Cardiac septum (tissue), 1 donor: ENCODE measurements at regions of chr10 and their contacts with region 1.

Region 1: DNA sequence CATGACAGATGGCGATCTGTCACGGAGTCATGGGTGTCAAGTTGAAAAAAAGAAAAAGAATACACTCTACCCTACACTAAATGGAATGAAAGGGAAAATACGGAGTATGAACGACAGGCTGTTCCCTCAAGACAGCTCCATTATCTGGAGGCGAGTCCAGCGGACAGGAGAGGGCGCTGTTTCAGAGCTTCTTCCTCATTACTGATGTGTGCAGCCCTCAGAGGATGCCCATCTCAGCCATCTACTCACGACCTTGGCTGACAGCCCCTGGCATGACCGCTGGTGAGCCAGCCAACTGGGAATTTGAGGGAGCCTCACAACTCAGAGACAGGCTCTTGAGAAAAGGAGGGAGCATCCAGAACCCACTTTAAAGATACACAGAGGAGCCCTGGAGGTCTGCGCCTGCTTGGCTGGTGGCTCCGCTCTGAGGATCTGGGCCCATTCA is 49.6 kb upstream of the SMNDC1 start:
- DNase-seq: peak; percentile 86

Region 2: GRCh38 chr10:110399163-110400094 is 45.1 kb after region 1 on chr10:
- intact Hi-C with region 1: loop called (anchors 5 kb)
- DNase-seq: no peak

Region 3: DNA sequence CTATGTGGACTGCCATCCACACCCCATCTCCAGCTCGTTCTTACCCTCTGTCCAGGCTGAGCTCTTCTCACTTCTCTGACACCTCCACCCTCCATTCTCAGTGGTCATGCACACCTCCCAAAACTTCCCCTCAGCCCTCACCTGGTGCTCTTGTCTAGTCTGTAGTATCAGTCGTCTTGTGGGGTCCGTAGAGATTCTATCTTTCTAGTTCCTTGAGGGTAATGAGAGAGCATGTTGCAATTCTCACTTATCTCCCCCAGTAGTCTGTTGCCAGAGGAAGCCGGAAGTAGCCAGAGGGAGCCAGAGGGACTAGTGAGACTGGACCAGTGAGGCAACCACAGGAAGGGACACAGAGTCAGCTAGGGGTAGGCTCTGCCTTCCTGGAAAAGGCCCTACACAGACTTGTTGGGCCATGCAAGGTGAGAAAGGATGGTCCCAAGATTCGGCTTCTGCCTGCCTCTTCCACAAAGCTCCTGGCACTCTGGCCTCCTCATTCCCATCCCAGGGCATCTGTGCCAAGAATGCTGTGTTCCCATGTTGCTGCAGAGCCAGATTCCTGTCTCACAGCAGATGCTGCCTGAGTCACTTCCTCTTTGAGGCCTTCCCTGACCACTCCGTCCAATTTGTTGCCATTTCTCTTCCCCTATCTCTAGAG is 92.7 kb after region 1 on chr10:
- intact Hi-C with region 1: loop called (anchors 10 kb)
- DNase-seq: peak; percentile 74

Region 4: DNA sequence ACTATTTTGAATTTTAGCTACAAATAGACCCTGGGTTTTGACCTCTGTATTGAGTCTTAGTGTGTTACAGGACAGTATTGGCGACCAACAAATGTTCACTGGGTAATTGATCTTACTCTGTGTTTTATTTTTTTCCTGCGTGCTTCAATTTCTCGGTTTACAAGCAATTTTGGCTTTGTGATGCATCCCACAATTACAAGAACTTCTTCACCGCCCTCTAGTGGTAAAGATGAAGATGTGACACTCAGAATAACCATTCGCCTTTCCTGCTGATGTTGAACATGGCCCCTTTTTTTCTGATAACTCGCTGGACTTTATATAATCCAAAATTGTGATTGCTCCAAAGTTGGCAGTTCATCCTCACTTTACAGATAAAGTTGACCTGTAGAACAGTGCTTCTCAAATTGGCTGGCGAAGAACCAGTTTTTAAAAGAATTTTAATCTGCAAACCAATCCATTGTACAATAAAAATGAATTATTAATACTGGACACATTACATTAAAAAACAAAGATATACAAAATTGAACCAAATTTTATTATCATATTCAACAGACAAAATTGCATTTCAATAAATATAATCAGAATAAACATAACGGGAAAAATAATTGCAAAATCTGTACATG is 192.9 kb after region 1 on chr10:
- intact Hi-C with region 1: loop called (anchors 5 kb)
- DNase-seq: no peak